ENCODE measurements at regions of chr7 and their contacts with region 1.

Region 1: GRCh38 chr7:99472561-99473243 is at the start of gene ZNF789:
- DNase-seq: peak; percentile 99
- ATAC-seq: peak; percentile 97
- H3K4me3 Mint-ChIP-seq: peak within 1 kb of the TSS; percentile 91
- H3K27ac Mint-ChIP-seq: peak within 1 kb of the TSS; percentile 96
- H3K4me1 Mint-ChIP-seq: peaks cover 29% of the 10 kb centered on the region
- H3K27me3 Mint-ChIP-seq: no peaks in the 10 kb centered on the region
- total RNA-seq, gene ZNF789: 18.2 to 18.9 TPM

Region 2: DNA sequence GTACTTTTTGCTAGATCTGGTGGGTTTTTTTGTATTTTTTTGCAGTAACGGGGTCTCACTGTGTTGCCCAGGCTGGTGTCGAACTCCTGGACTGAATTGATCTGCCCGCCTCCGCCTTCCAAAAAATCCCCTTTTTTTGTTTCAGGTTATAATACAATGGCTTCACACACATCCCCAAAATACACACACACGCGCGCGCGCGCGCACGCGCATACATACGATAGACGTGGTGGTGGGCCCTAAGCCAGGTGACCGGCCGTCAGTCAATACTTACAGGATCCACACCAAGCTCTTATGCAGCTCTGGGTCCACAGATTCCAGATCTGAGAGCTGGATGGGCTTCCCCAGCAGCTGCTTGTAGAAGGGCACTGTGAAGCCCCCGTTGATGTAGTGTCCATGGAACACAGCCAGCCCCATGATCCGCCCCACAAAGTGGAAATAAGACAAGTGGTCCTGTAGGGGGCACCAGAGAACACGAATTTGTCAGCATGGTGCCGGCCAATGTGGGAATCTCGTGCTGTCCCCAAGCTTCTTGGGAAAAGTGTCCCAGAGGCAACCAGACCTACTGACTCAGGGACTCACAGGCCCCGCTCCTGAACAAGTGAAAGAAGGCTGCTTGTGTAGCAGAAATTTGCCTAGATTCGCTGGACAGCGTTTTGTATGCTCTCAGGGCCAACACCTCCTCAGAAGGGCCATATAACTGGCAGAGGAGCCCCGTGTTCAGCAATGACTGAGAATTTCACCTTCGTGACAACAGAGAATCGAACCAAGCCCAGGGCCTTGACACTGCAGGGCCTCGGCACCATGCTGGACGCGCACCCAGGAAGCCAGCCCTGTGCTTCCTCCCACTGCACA is 432.4 kb before region 1 on chr7:
- CTCF ChIA-PET with region 1: no interaction called
- POLR2A ChIA-PET with region 1: no interaction called
- intact Hi-C with region 1: no loop called
- DNase-seq: peak; percentile 75
- ATAC-seq: peak; percentile 79
- H3K4me3 Mint-ChIP-seq: no peak overlapping the region
- H3K27ac Mint-ChIP-seq: no peak overlapping the region
- H3K4me1 Mint-ChIP-seq: no peaks in the 10 kb centered on the region
- H3K27me3 Mint-ChIP-seq: no peaks in the 10 kb centered on the region

Region 3: GRCh38 chr7:99364961-99365817 is 107.5 kb before region 1 on chr7:
- CTCF ChIA-PET with region 1: no interaction called
- POLR2A ChIA-PET with region 1: no interaction called
- intact Hi-C with region 1: no loop called
- DNase-seq: peak; percentile 75
- ATAC-seq: peak; percentile 93
- H3K4me3 Mint-ChIP-seq: no peak overlapping the region
- H3K27ac Mint-ChIP-seq: no peak overlapping the region
- H3K4me1 Mint-ChIP-seq: no peaks in the 10 kb centered on the region
- H3K27me3 Mint-ChIP-seq: no peaks in the 10 kb centered on the region

Region 4: GRCh38 chr7:99380032-99380822 is 92.5 kb before region 1 on chr7:
- CTCF ChIA-PET with region 1: no interaction called
- POLR2A ChIA-PET with region 1: interaction called, 3 read pairs
- intact Hi-C with region 1: loop called in 1 of 2 experiments (anchors 1 kb)
- DNase-seq: peak; percentile 69
- ATAC-seq: peak; percentile 22
- H3K4me3 Mint-ChIP-seq: peak overlapping the region; percentile 78
- H3K27ac Mint-ChIP-seq: peak overlapping the region; percentile 96
- H3K4me1 Mint-ChIP-seq: peaks cover 62% of the 10 kb centered on the region
- H3K27me3 Mint-ChIP-seq: no peaks in the 10 kb centered on the region

Region 5: GRCh38 chr7:99504603-99505323 is 32.1 kb after region 1 on chr7 and contains the start of gene ZKSCAN5:
- CTCF ChIA-PET with region 1: interaction called, 3 read pairs
- POLR2A ChIA-PET with region 1: interaction called, 8 read pairs
- intact Hi-C with region 1: loop called (anchors 1 kb)
- DNase-seq: peak; percentile 99
- ATAC-seq: peak; percentile 87
- H3K4me3 Mint-ChIP-seq: peak within 1 kb of the TSS; percentile 87
- H3K27ac Mint-ChIP-seq: peak within 1 kb of the TSS; percentile 97
- H3K4me1 Mint-ChIP-seq: peaks cover 25% of the 10 kb centered on the region
- H3K27me3 Mint-ChIP-seq: no peaks in the 10 kb centered on the region
- total RNA-seq, gene ZKSCAN5: 10.1 to 12.1 TPM

Region 6: GRCh38 chr7:99558306-99559174 is 85.8 kb after region 1 on chr7 and contains the start of gene ZNF655:
- CTCF ChIA-PET with region 1: no interaction called
- POLR2A ChIA-PET with region 1: no interaction called
- intact Hi-C with region 1: loop called (anchors 1 to 2 kb)
- DNase-seq: peak; percentile 90
- ATAC-seq: peak; percentile 75
- H3K4me3 Mint-ChIP-seq: peak within 1 kb of the TSS; percentile 94
- H3K27ac Mint-ChIP-seq: peak within 1 kb of the TSS; percentile 96
- H3K4me1 Mint-ChIP-seq: peaks cover 49% of the 10 kb centered on the region
- H3K27me3 Mint-ChIP-seq: no peaks in the 10 kb centered on the region
- total RNA-seq, gene ZNF655: 51.1 to 52.0 TPM

Region 7: DNA sequence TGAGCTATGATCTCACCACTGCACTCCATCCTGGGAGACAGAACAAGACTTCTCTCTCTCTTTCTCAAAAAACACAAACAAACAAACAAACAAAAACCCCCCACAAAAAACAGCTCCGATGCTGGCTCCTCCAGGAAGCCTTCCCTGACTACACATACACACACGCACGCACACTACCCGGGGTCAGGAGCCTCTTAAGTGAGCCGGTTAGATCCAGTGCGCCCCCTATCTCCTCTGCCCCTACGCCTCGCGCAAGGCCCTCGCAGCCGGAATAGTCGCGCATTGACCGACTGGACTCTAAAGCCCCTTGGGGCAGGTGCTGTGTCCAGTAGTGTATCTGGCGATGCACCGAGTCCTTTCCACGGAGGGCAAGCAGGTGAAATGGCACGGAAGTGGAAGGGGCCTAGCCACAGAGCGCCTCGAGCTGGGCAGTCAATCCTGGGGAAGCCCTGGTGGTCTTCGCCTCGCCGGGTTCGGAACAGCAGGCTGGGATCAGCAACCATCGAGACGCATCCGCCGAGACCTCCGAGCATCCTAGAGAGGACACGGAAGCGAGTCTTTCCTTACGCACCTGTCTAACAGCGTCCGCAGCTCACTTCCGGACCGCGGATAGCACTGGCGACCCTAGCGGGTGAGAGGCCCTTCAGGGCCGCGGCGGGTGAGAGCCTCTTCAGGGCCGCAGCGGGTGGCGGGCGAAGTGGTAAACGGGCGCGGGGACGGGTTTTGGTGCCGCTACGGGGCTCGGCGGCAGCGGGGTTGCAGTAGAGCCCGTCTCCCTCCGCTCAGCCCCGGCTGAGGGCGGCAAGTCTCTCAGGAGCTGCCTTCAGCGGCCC is 143.9 kb after region 1 on chr7 and contains the start of gene ZSCAN25:
- CTCF ChIA-PET with region 1: no interaction called
- POLR2A ChIA-PET with region 1: no interaction called
- intact Hi-C with region 1: loop called in 1 of 2 experiments (anchors 1 kb)
- DNase-seq: peak; percentile 92
- ATAC-seq: peak; percentile 93
- H3K4me3 Mint-ChIP-seq: peak within 1 kb of the TSS; percentile 92
- H3K27ac Mint-ChIP-seq: peak within 1 kb of the TSS; percentile 96
- H3K4me1 Mint-ChIP-seq: peaks cover 44% of the 10 kb centered on the region
- H3K27me3 Mint-ChIP-seq: no peaks in the 10 kb centered on the region
- total RNA-seq, gene ZSCAN25: 20.5 to 25.2 TPM